AG04450 (cell line): ENCODE measurements at regions of chr16 and their contacts with region 1.

Region 1: GRCh38 chr16:22001591-22001990 is 675 bp upstream of the PDZD9 start:
- DNase-seq: peak; percentile 13
- H3K4me3 ChIP-seq: no peak overlapping the region
- H3K27ac ChIP-seq: no peak overlapping the region
- H3K27me3 ChIP-seq: no peaks in the 10 kb centered on the region
- CTCF ChIP-seq: no peak

Region 2: GRCh38 chr16:22014271-22014873 is 12.8 kb after region 1 on chr16:
- CTCF ChIA-PET with region 1: interaction called, 7 read pairs
- POLR2A ChIA-PET with region 1: interaction called, 16 read pairs
- DNase-seq: no peak
- H3K4me3 ChIP-seq: no peak overlapping the region
- H3K27ac ChIP-seq: no peak overlapping the region
- H3K27me3 ChIP-seq: no peaks in the 10 kb centered on the region
- CTCF ChIP-seq: no peak

Region 3: DNA sequence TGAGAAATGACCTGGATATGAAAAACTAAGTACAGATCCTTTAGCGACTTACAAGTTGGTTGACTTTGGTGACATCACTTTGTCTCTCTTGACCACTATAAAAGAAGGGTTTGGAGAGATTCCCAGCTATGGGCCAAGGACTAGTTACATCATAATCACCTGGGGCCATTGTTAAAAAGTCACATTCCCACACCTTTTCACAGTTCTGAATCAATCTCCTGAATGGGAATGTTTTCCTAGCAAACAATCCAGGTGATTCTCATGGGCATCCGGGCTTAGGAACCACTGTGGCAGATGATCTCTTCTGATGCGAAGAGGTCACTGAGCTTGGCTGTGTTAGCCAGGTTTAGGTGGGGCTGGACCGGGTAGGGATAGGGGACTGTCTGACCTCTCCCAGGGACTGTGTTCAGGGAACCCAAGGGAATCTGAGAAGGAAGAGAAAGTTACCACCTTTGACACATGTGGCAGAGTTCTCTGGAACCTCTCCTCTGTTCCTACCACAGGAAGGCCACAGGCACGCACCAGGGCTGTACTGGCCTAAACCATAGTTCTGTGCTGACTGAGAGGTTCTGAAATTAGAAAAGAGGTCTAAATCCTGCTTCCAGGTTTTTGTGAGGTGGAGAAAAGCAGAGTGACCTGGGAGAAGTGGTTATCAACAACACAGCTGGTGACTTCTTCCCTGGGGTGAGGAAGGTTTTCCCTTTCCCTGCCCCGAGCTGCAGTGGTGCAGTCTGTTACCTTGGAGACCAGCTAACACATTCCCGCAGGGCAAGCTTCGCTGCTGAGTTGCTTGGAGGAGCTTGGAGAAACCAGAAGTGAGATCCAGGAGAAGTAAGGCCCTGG is 90.4 kb after region 1 on chr16 and contains the start of gene VWA3A:
- CTCF ChIA-PET with region 1: interaction called, 13 read pairs
- POLR2A ChIA-PET with region 1: no interaction called
- DNase-seq: peak; percentile 27
- H3K4me3 ChIP-seq: no peak within 1 kb of the TSS
- H3K27ac ChIP-seq: peak within 1 kb of the TSS; percentile 61
- H3K27me3 ChIP-seq: peaks cover 6% of the 10 kb centered on the region
- CTCF ChIP-seq: no peak
- polyA plus RNA-seq, gene VWA3A: not detected in 2 replicates